BJ (cell line): ENCODE measurements at regions of chr7 and their contacts with region 1.

Region 1: GRCh38 chr7:134605973-134606923 is 40.4 kb upstream of the BPGM start:
- DNase-seq: no peak
- H3K4me3 ChIP-seq: no peak overlapping the region
- H3K27me3 ChIP-seq: no peaks in the 10 kb centered on the region
- CTCF ChIP-seq: peak; percentile 91

Region 2: DNA sequence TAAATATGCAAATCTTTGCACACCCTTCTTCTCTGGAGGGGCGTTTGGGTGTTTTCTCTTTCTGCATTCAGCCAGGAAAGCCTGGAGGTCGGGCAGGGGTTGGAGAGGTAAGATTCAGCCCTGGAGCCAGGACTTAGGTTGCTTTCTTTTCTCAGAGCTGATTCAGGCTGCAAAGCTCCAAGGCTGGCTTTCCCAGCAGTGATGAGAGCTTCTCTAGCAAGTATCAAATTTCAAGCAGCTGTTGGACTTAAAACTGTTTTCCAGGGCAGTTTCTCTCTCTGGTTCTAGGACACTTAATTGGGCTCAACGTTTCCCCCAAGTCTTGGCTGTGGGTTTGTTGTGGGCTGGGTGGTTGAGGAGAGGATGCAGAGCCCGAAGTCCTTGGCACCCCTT is 78.3 kb before region 1 on chr7:
- CTCF ChIA-PET with region 1: interaction called, 29 read pairs
- POLR2A ChIA-PET with region 1: no interaction called
- DNase-seq: peak; percentile 13
- H3K4me3 ChIP-seq: no peak overlapping the region
- H3K27me3 ChIP-seq: peaks cover 1% of the 10 kb centered on the region
- CTCF ChIP-seq: no peak

Region 3: DNA sequence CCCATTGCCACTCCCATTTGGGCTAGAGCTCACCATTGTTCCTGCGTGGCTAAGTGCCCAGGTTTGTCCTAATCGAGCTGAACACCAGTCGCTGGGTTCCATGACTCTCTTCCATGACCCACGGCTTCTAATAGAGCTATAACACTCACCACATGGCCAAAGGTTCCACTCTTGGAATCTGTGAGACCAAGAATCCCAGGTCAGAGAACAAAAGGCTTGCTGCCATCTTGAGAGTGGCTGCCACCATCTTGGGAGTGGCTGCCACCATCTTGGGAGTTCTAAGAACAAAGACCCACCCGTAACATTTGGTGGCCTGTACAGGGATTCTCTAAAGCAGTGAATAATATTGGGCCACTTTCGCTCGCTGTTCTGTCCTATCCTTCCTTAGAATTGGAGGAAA is 20.4 kb before region 1 on chr7:
- CTCF ChIA-PET with region 1: interaction called, 11 read pairs
- POLR2A ChIA-PET with region 1: no interaction called
- DNase-seq: no peak
- H3K4me3 ChIP-seq: no peak overlapping the region
- H3K27me3 ChIP-seq: peaks cover 6% of the 10 kb centered on the region
- CTCF ChIP-seq: no peak

Region 4: GRCh38 chr7:134619627-134620331 is 13.5 kb after region 1 on chr7:
- CTCF ChIA-PET with region 1: interaction called, 6 read pairs
- POLR2A ChIA-PET with region 1: interaction called, 29 read pairs
- DNase-seq: peak; percentile 81
- H3K4me3 ChIP-seq: no peak overlapping the region
- H3K27me3 ChIP-seq: no peaks in the 10 kb centered on the region
- CTCF ChIP-seq: no peak